Panc1 (cell line): ENCODE measurements at regions of chr18 and their contacts with region 1.

Region 1: DNA sequence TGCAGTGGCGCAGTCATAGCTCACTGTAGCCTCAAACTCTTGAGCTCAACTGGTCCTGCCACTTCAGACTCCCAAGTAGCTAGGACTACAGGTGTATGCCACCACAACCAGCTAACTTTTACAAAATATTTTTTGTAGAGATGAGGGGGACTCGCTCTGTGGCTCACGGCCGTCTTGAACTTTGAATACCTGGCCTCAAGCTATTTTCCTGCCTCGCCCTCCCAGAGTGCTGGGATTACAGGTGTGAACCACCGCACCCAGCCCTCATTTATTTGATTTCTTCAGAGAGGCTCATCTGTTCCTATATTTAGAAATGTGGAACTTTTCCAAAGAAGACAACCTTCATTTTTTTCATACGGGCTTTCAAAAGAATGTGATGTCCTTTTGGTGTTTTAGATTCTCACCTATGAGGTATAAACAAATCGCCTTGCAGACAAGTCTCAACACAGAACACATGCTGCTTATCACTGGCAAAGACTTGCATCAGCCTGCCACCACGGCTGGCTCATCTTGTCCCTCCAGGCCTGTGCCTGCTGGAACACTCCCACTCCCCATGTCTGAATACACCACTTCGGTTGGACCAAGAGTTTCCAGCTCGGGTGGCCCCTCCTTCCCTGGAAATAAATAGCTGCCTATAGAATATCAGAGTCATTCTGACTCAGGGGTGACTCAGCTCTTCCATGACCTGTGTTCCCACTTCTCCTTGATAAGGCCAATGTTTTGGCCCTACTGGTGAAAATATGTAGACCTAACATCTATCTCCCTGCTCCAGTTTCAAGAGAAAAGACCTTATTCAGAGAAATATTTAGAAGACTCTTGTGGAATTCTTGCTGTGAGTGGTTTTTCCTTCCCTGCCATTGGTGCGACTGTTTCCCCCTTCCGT is 202.6 kb downstream of the TGIF1 start:
- DNase-seq: peak; percentile 97
- ATAC-seq: peak; percentile 87
- H3K4me3 ChIP-seq: peak overlapping the region; percentile 43 to 53
- H3K27ac ChIP-seq: peak overlapping the region; percentile 100
- H3K4me1 ChIP-seq: peaks cover 76% of the 10 kb centered on the region
- H3K27me3 ChIP-seq: no peaks in the 10 kb centered on the region
- CTCF ChIP-seq: no peak

Region 2: GRCh38 chr18:3321133-3321812 is 331.3 kb before region 1 on chr18:
- CTCF ChIA-PET with region 1: interaction called, 12 read pairs
- POLR2A ChIA-PET with region 1: no interaction called
- in situ Hi-C with region 1: no loop called
- intact Hi-C with region 1: no loop called
- DNase-seq: peak; percentile 45
- ATAC-seq: no peak
- H3K4me3 ChIP-seq: no peak overlapping the region
- H3K27ac ChIP-seq: peak overlapping the region; percentile 81
- H3K4me1 ChIP-seq: peaks cover 47% of the 10 kb centered on the region
- H3K27me3 ChIP-seq: no peaks in the 10 kb centered on the region
- CTCF ChIP-seq: no peak

Region 3: GRCh38 chr18:3554091-3554601 is 98.5 kb before region 1 on chr18:
- CTCF ChIA-PET with region 1: no interaction called
- POLR2A ChIA-PET with region 1: no interaction called
- in situ Hi-C with region 1: no loop called
- intact Hi-C with region 1: no loop called
- DNase-seq: no peak
- ATAC-seq: no peak
- H3K4me3 ChIP-seq: no peak overlapping the region
- H3K27ac ChIP-seq: peak overlapping the region; percentile 57; the same call in 1 of the 2 replicates
- H3K4me1 ChIP-seq: no peaks in the 10 kb centered on the region; the same call in 1 of the 2 replicates
- H3K27me3 ChIP-seq: no peaks in the 10 kb centered on the region
- CTCF ChIP-seq: no peak